ENCODE measurements at regions of chr4 and their contacts with region 1.

Region 1: GRCh38 chr4:8198906-8199593 is at the start of gene SH3TC1:
- DNase-seq: peak; percentile 65
- H3K4me3 Mint-ChIP-seq: peak within 1 kb of the TSS; percentile 89
- H3K27ac Mint-ChIP-seq: peak within 1 kb of the TSS; percentile 95
- H3K4me1 Mint-ChIP-seq: peaks cover 30% of the 10 kb centered on the region
- H3K27me3 Mint-ChIP-seq: peaks cover 1% of the 10 kb centered on the region
- total RNA-seq, gene SH3TC1: 25.4 and 33.6 TPM in 2 replicates

Region 2: GRCh38 chr4:8176547-8177399 is 22.3 kb before region 1 on chr4:
- intact Hi-C with region 1: loop called (anchors 1 kb)
- DNase-seq: peak; percentile 20
- H3K4me3 Mint-ChIP-seq: no peak overlapping the region
- H3K27ac Mint-ChIP-seq: no peak overlapping the region
- H3K4me1 Mint-ChIP-seq: no peaks in the 10 kb centered on the region
- H3K27me3 Mint-ChIP-seq: peaks cover 1% of the 10 kb centered on the region

Region 3: GRCh38 chr4:8228319-8229250 is 29.5 kb after region 1 on chr4:
- intact Hi-C with region 1: loop called (anchors 1 kb)
- DNase-seq: peak; percentile 56
- H3K4me3 Mint-ChIP-seq: no peak overlapping the region
- H3K27ac Mint-ChIP-seq: peak overlapping the region; percentile 65
- H3K4me1 Mint-ChIP-seq: peaks cover 14% of the 10 kb centered on the region
- H3K27me3 Mint-ChIP-seq: no peaks in the 10 kb centered on the region